Activated T-helper 2 cell treated with anti-CD3 and anti-CD28 coated beads, Interferon-gamma antibody, Interleukin-2, Interleukin-4, amounts not matched to agents 10 μg/mL and 5 μg/mL and 100 μg/mL, durations not matched to agents 14 hours and 24 hours and 36 hours (primary cell): ENCODE measurements at regions of chr1 and their contacts with region 1.

Region 1: GRCh38 chr1:113835642-113836307 is 23.5 kb upstream of the RSBN1 start:
- DNase-seq: no peak
- H3K4me3 Mint-ChIP-seq: no peak overlapping the region
- H3K27ac Mint-ChIP-seq: no peak overlapping the region
- H3K4me1 Mint-ChIP-seq: peaks cover 5% of the 10 kb centered on the region
- H3K27me3 Mint-ChIP-seq: no peaks in the 10 kb centered on the region

Region 2: DNA sequence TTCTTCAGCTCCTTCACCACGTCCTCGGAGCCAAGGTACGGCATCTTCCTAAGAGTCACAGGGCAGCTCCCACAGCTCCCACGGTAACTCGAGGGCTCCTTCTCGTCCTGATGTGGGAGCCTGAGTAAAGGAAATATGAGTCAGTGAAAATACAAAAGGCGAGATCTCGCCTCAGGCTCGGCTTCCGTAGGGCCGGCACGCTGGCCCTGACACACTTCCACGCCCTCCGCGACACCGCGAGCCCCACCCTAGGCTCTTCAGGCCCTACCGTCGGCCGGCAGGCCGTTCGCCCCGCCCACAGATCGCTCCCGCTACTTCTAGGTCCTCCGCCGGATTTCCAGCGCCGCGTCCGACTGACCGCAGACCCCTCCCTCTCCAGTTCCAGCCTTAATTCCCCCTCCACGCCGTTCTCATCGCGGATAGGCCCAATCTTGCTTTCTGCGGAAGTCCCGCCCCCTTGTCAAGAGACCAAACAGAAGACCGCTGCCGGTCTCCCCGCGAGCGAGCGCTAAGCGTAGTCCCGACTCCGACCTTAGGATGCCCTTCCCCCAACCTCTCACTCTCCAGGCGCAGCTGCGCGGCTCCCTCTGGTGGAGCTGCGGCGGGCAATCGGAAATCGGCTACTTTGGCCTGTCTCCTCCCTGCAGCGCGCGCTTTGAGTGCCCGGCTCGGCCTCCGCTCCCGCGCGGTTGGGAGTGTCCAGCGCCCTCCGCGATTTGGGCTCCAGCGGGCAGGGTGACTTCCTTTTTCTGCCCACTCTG is 69.1 kb after region 1 on chr1 and contains the starts of genes AP4B1 and DCLRE1B:
- intact Hi-C with region 1: loop called (anchors 1 kb)
- DNase-seq: peak; percentile 99
- H3K4me3 Mint-ChIP-seq: peak within 1 kb of the TSS; percentile 99
- H3K27ac Mint-ChIP-seq: peak within 1 kb of the TSS; percentile 97
- H3K4me1 Mint-ChIP-seq: peaks cover 59% of the 10 kb centered on the region
- H3K27me3 Mint-ChIP-seq: no peaks in the 10 kb centered on the region
- total RNA-seq, gene AP4B1: 42.0 and 45.9 TPM in 2 replicates
- total RNA-seq, gene DCLRE1B: 18.8 and 20.8 TPM in 2 replicates

Region 3: GRCh38 chr1:114282751-114283403 is 447.1 kb after region 1 on chr1:
- intact Hi-C with region 1: loop called (anchors 10 kb)
- DNase-seq: peak; percentile 67
- H3K4me3 Mint-ChIP-seq: no peak overlapping the region
- H3K27ac Mint-ChIP-seq: no peak overlapping the region
- H3K4me1 Mint-ChIP-seq: peaks cover 3% of the 10 kb centered on the region
- H3K27me3 Mint-ChIP-seq: peaks cover 21% of the 10 kb centered on the region